Endothelial cell of umbilical vein (primary cell): ENCODE measurements at regions of chr6 and their contacts with region 1.

Region 1: DNA sequence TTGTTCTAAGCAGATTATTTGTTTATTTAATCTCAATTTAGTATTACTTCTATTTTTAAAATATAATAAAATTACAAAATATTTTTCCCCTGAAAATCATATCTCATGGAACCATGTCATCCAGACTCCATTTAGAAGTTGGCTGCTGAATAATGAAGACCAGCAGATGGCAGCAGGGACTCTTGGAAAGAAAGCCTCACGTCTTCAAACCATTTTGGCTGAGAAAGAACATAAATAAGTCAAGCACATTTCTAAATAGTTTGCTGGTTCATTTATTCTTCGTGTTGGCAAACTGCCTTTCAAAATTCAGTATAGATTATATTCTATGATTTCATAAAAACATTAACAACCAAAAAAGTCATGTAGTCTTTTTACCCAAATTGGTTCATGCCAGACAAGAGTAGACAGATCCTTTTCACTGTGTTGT is 71.7 kb downstream of the RCAN2 start:
- DNase-seq: peak; percentile 63
- H3K4me3 ChIP-seq: no peak overlapping the region
- H3K27ac ChIP-seq: no peak overlapping the region
- H3K4me1 ChIP-seq: no peaks in the 10 kb centered on the region
- H3K27me3 ChIP-seq: peaks cover 4 to 12% of the 10 kb centered on the region in 2 experiments
- CTCF ChIP-seq: peak; percentile 46 to 63
- POLR2A ChIP-seq: no peak

Region 2: GRCh38 chr6:46279874-46280273 is 139.7 kb before region 1 on chr6:
- CTCF ChIA-PET with region 1: no interaction called
- POLR2A ChIA-PET with region 1: no interaction called
- dilution Hi-C with region 1: no loop called
- intact Hi-C with region 1: no loop called
- DNase-seq: no peak
- H3K4me3 ChIP-seq: no peak overlapping the region
- H3K27ac ChIP-seq: no peak overlapping the region
- H3K4me1 ChIP-seq: no peaks in the 10 kb centered on the region
- H3K27me3 ChIP-seq: peaks cover 8 to 11% of the 10 kb centered on the region in 2 experiments
- CTCF ChIP-seq: no peak
- POLR2A ChIP-seq: no peak

Region 3: GRCh38 chr6:46491628-46492547 is 72.3 kb after region 1 on chr6:
- CTCF ChIA-PET with region 1: interaction called, 4 read pairs
- POLR2A ChIA-PET with region 1: no interaction called
- dilution Hi-C with region 1: no loop called
- intact Hi-C with region 1: loop called (anchors 1 kb)
- DNase-seq: peak; percentile 12
- H3K4me3 ChIP-seq: peak overlapping the region; percentile 14 to 42 (median 40)
- H3K27ac ChIP-seq: no peak overlapping the region
- H3K4me1 ChIP-seq: peaks cover 8% of the 10 kb centered on the region
- H3K27me3 ChIP-seq: peaks cover 29 to 50% of the 10 kb centered on the region in 2 experiments
- CTCF ChIP-seq: peak; percentile 27 to 42
- POLR2A ChIP-seq: no peak

Region 4: DNA sequence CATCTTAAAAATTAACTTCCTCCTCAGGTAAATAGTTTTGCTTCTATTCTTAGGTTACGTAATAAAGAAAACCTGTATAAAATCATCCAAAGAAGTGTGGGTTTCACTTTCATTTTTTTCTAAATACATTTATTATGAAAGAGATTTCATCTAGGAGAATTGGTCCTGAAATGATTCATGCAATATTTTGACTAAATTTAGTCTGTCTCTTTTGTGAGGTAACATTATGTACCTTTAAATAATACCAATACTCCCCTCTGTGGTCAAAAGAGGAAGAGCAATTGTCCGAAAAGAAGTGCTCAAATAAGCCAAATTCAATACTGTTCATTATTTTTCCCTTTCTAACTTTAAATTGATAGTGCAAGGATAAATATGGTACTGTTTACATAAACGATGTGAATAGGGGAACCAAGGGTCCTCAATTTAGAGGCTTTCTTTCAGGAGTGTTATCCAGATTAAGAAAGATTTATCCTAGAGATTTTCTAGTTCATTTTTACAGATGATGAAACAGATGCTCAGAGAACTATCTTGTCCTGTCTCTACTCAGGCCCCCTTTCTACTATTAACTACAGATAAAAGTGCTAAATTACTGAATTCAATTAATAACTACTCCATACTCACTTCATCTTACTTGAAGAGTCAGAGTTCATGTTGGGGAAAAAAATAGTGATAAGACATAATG is 206.8 kb after region 1 on chr6:
- CTCF ChIA-PET with region 1: interaction called, 3 read pairs
- POLR2A ChIA-PET with region 1: no interaction called
- dilution Hi-C with region 1: no loop called
- intact Hi-C with region 1: loop called (anchors 1 kb)
- DNase-seq: peak; percentile 27
- H3K4me3 ChIP-seq: no peak overlapping the region
- H3K27ac ChIP-seq: no peak overlapping the region
- H3K4me1 ChIP-seq: no peaks in the 10 kb centered on the region
- H3K27me3 ChIP-seq: no peaks in the 10 kb centered on the region
- CTCF ChIP-seq: peak in 1 of 2 donors; percentile 16
- POLR2A ChIP-seq: no peak

Region 5: GRCh38 chr6:46781478-46782378 is 362.1 kb after region 1 on chr6:
- CTCF ChIA-PET with region 1: interaction called, 6 read pairs
- POLR2A ChIA-PET with region 1: no interaction called
- dilution Hi-C with region 1: no loop called
- intact Hi-C with region 1: loop called (anchors 1 kb)
- DNase-seq: peak; percentile 63
- H3K4me3 ChIP-seq: no peak overlapping the region
- H3K27ac ChIP-seq: no peak overlapping the region
- H3K4me1 ChIP-seq: no peaks in the 10 kb centered on the region
- H3K27me3 ChIP-seq: peaks cover 0 to 4% of the 10 kb centered on the region in 2 experiments
- CTCF ChIP-seq: peak; percentile 50 to 60
- POLR2A ChIP-seq: no peak